ENCODE measurements at regions of chr1 and their contacts with region 1.

Region 1: DNA sequence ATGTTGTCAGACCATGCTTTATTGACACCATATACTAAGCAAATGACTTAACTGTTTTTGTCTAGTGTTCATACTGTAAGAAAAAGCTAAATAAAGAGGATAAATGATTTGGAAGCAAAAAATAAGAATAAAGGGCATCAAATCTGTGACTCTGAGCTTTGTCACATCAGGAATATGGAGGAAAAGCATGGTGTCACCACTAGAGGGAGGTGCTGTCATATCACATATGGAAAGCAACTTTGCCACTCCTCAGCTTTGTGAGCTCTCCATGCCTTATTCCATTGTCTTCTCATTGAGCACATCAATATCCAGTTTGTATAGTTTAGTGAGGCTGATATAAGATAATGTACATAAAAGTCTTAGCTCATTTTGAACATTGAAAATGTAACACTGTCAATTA is 20.8 kb upstream of the GBP1 start:
- DNase-seq: no peak
- ATAC-seq: no peak

Region 2: GRCh38 chr1:89179343-89179742 is 93.6 kb after region 1 on chr1:
- intact Hi-C with region 1: no loop called
- DNase-seq: no peak
- ATAC-seq: no peak

Region 3: DNA sequence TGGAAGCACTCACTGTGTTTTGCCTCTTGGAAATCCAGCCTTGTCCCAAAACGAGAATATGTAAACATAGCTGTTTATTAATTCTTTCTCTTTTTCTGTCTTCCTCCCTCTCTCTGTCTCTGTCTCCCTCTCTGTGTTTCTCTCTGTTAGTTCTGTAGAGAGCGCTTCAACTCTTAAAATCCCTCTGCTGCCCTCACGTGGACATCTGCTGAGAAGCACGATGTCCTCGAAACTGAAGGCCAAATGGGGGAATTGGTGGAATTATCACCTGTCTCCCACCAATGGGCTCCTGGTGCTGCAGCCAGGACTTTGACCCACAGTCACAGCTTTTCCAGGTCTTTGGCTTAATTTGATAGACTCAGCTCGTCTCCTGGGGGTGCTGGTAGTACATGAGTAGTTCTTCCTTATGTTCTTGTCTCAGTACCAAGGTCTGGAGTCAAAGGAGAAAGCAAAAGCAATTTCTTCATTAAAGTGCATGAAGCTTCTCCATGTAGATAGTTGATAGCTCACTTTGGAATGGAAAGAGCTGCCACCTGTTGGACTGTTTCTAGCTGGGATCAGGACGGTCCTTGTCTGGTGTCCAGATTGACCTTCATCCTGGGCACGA is 272.6 kb after region 1 on chr1:
- intact Hi-C with region 1: loop called in 1 of 2 experiments (anchors 2 kb)
- DNase-seq: peak; percentile 63 to 90
- ATAC-seq: peak; percentile 87

Region 4: GRCh38 chr1:89444791-89445190 is 359.0 kb after region 1 on chr1:
- intact Hi-C with region 1: loop called in 1 of 2 experiments (anchors 10 kb)
- DNase-seq: no peak
- ATAC-seq: no peak